CD14-positive monocyte (primary cell): ENCODE measurements at regions of chr22 and their contacts with region 1.

Region 1: GRCh38 chr22:49930739-49931412 is 12.4 kb downstream of the CRELD2 start:
- DNase-seq: peak; percentile 91 to 96 (median 95)
- H3K4me3 ChIP-seq: peak overlapping the region in 1 of 3 experiments; percentile 18
- H3K4me3 Mint-ChIP-seq: peak overlapping the region; percentile 35 to 49
- H3K27ac ChIP-seq: peak overlapping the region; percentile 45 to 62
- H3K27ac Mint-ChIP-seq: peak overlapping the region; percentile 79 to 91 (median 89)
- H3K4me1 ChIP-seq: peaks cover 47 to 58% of the 10 kb centered on the region in 2 donors
- H3K4me1 Mint-ChIP-seq: peaks cover 36% of the 10 kb centered on the region
- H3K27me3 ChIP-seq: peaks cover 0 to 3% of the 10 kb centered on the region in 2 donors
- H3K27me3 Mint-ChIP-seq: peaks cover 1 to 10% (median 2%) of the 10 kb centered on the region in 3 donors
- CTCF ChIP-seq: peak; percentile 89

Region 2: GRCh38 chr22:49894322-49895054 is 36.4 kb before region 1 on chr22:
- intact Hi-C with region 1: no loop called
- DNase-seq: no peak
- H3K4me3 ChIP-seq: no peak overlapping the region
- H3K4me3 Mint-ChIP-seq: no peak overlapping the region
- H3K27ac ChIP-seq: no peak overlapping the region
- H3K27ac Mint-ChIP-seq: peak overlapping the region in 2 of 7 donors; percentile 11 to 46
- H3K4me1 ChIP-seq: no peaks in the 10 kb centered on the region
- H3K4me1 Mint-ChIP-seq: no peaks in the 10 kb centered on the region
- H3K27me3 ChIP-seq: no peaks in the 10 kb centered on the region
- H3K27me3 Mint-ChIP-seq: no peaks in the 10 kb centered on the region
- CTCF ChIP-seq: no peak

Region 3: DNA sequence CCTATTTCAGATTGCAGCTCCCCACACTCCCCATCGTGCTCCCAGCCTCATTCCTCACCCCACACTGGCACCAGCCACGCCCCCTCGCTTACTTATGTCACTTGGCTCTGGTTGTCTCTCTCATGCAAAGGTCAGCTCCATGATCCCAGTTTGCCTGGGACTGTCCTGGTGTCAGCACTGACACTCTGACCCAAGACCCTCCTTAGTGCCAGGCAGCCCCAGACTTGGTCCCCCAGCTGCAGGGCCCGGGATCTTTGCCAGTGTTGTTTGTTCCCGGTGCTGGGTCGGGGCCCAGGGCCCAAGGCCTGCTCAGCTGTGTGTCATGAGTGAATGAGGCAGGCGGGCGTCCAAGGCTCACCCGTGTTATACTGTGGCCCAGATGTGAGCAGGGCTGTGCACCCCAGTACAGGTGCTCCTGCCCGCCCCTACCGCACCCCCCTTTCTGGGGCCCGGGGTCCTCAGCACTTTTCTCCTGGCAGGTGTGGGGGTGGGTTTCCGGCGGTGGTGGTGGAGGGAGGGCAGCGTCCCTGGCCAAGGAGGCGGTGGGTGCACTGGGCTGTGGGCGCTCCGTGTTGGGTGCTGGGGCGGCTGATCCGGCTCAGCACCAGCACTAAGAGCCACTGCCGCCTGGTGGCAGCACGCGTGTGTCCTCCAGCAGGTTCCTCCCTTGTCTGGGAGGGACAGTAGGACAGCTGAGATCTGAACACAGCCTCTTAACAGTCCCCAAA is 62.2 kb after region 1 on chr22:
- intact Hi-C with region 1: loop called in 1 of 2 experiments (anchors 2 kb)
- DNase-seq: peak; percentile 59 to 79 (median 76)
- H3K4me3 ChIP-seq: no peak overlapping the region
- H3K4me3 Mint-ChIP-seq: no peak overlapping the region
- H3K27ac ChIP-seq: no peak overlapping the region
- H3K27ac Mint-ChIP-seq: peak overlapping the region in 1 of 7 donors; percentile 3
- H3K4me1 ChIP-seq: no peaks in the 10 kb centered on the region
- H3K4me1 Mint-ChIP-seq: peaks cover 6% of the 10 kb centered on the region
- H3K27me3 ChIP-seq: no peaks in the 10 kb centered on the region
- H3K27me3 Mint-ChIP-seq: peaks cover 9 to 14% (median 10%) of the 10 kb centered on the region in 3 donors
- CTCF ChIP-seq: peak; percentile 78

Region 4: DNA sequence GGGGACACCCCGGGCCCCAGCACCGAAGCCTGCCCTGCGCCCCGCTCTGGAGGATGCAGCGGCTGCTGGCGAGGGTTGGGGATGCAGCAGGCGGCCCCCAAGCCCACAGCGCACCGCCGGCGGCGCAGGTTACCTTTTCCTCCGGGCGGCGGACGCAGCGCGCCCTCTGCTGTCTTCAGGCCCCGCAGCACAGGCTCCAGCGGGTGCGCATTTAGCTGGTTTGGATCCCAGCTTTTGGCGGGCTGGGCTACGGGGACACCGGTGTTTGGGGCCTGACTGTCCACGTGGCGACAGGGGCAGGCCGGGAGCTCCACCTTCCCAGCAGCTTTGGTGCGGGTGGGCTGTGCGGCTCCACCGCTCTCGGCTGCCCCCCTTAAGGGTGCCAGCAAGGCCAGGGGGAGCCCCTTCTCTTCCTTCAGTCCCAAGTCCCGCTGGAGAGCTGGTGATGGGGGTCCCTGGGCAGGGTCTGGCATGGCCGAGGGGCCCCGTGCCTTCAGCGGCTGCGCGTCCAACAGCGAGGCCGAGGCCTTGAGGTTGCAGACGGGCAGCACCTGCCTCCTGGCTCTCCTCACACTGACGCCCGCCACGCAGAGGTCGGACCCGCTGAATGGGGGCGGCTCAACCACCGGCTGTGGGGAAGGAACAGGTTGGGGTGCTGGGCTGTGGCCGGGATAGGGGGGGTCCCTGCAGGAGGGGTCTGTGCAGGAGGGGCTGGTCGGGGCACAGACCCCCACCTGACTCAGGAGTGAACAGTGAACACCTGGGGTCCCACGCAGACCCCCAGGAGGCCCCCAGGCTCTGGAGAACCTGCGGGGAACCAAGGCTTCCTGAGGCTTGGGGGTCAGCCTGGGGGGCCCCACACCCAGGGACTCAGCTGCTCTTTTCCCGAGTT is 99.7 kb after region 1 on chr22:
- intact Hi-C with region 1: loop called (anchors 1 to 2 kb)
- DNase-seq: peak; percentile 63 to 67 (median 63)
- H3K4me3 ChIP-seq: no peak overlapping the region
- H3K4me3 Mint-ChIP-seq: no peak overlapping the region
- H3K27ac ChIP-seq: no peak overlapping the region
- H3K27ac Mint-ChIP-seq: no peak overlapping the region
- H3K4me1 ChIP-seq: peaks cover 0 to 6% of the 10 kb centered on the region in 2 donors
- H3K4me1 Mint-ChIP-seq: peaks cover 3% of the 10 kb centered on the region
- H3K27me3 ChIP-seq: peaks cover 8 to 27% of the 10 kb centered on the region in 2 donors
- H3K27me3 Mint-ChIP-seq: peaks cover 15 to 31% (median 27%) of the 10 kb centered on the region in 3 donors
- CTCF ChIP-seq: peak; percentile 85